CD14-positive monocyte (primary cell): ENCODE measurements at regions of chr12 and their contacts with region 1.

Region 1: DNA sequence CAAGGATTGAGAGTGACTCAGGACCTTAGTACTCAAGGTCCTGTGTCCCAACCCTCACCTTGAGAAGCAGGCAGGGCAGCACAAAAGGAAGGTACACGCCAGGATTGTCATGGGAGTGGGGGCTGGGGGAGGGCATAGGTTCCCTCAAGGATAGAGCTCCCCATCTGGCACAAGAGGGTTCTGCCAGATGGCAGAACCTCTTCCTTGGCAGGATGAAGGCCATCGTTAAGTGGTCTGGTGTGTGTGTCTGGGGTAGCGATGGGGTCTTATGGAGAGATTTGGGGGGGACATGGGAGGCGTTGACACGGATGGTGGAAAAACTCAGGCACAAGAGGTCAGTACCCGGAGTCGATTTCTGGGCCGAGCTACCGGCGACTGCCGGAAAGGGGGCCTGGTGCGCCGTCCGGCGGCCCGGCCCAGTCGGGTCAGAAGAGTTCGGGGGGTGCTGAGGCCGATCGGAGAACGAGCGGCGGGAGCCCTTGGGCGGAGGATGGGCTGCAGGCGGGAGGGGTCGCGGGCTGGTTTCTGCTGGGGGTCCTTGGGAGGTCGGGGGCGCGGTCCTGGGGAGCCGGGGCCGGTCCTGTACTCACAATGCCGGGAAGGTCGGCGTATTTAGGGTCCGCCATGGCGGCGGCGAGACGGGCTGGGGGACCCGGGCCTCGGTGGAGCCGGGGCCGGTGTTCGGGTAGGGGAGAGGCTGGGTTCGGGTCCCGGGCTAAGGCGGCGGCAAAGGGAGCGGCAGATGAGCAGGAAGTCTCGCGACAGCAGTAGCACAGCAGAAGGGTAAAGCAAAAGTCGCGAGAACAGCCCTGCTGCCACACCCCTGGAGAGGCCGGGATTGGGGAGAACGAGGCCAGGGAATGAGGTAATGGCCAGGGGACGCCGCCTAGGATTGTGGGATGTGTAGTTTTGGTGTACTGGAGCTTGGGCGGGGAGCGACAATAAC is at the start of gene DCTN2:
- DNase-seq: peak; percentile 93 to 97 (median 95)
- H3K4me3 ChIP-seq: peak within 1 kb of the TSS; percentile 73 to 96 (median 94)
- H3K4me3 Mint-ChIP-seq: peak within 1 kb of the TSS; percentile 99 to 100
- H3K27ac ChIP-seq: peak within 1 kb of the TSS; percentile 23 to 82
- H3K27ac Mint-ChIP-seq: peak within 1 kb of the TSS; percentile 84 to 96 (median 88)
- H3K4me1 ChIP-seq: peaks cover 18 to 42% of the 10 kb centered on the region in 2 donors
- H3K4me1 Mint-ChIP-seq: peaks cover 48% of the 10 kb centered on the region
- H3K27me3 ChIP-seq: peaks cover 25 to 35% of the 10 kb centered on the region in 2 donors
- H3K27me3 Mint-ChIP-seq: peaks cover 31 to 35% (median 31%) of the 10 kb centered on the region in 3 donors
- CTCF ChIP-seq: no peak
- polyA plus RNA-seq, gene DCTN2: 72.8 to 94.5 (median 82.2) TPM

Region 2: DNA sequence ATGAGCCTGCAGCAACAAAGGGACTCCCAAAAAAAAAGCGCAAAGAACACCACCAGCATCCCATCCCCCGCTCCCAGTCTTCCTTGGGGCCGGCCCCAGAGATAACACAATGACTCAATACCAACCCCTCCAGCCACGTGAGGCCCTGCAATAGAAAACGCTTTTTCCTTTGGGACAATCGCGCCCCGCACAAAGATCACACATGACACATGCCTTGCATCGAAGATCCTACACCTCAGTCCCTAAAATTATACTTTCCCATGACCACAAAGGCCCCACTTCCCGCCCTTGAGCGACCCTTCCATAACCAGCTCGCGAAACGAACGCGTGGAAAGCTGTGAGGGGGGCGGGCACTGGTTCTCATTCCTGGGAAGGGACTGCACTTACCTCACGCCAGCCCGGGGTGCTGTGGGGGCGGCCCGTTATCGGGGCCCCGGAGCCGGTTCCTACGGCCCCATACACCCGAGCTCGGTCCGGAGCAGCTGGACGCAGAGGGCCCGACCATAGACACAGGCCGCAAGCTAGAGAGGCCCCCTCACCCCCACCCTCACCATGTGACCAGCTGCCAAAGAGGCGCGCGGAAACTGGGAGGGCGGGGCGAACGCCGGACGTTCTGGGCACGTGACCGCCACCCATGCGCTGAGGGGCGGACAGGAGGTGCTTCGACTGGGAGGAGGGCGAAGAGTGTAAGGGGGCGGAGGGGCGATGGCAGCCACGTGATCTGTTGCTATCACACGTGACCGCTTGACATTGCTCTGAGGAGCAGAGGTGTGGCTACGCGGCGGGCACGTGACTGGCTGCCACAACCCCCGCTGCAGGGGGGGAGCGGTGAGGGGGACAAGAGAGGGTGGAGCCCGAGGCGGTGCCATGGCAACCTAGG is 205.3 kb after region 1 on chr12 and contains the start of gene CDK4:
- intact Hi-C with region 1: loop called in 1 of 2 experiments (anchors 10 kb)
- DNase-seq: peak; percentile 99 to 100 (median 99)
- H3K4me3 ChIP-seq: peak within 1 kb of the TSS; percentile 36 to 81 (median 68)
- H3K4me3 Mint-ChIP-seq: peak within 1 kb of the TSS; percentile 82 to 96
- H3K27ac ChIP-seq: peak within 1 kb of the TSS; percentile 79 to 82
- H3K27ac Mint-ChIP-seq: peak within 1 kb of the TSS; percentile 84 to 95 (median 92)
- H3K4me1 ChIP-seq: peaks cover 38 to 43% of the 10 kb centered on the region in 2 donors
- H3K4me1 Mint-ChIP-seq: peaks cover 43% of the 10 kb centered on the region
- H3K27me3 ChIP-seq: peaks cover 0 to 7% of the 10 kb centered on the region in 2 donors
- H3K27me3 Mint-ChIP-seq: peaks cover 7 to 13% (median 7%) of the 10 kb centered on the region in 3 donors
- CTCF ChIP-seq: no peak
- polyA plus RNA-seq, gene CDK4: 26.2 to 38.4 (median 27.4) TPM